ENCODE measurements at regions of chr16 and their contacts with region 1.

Region 1: DNA sequence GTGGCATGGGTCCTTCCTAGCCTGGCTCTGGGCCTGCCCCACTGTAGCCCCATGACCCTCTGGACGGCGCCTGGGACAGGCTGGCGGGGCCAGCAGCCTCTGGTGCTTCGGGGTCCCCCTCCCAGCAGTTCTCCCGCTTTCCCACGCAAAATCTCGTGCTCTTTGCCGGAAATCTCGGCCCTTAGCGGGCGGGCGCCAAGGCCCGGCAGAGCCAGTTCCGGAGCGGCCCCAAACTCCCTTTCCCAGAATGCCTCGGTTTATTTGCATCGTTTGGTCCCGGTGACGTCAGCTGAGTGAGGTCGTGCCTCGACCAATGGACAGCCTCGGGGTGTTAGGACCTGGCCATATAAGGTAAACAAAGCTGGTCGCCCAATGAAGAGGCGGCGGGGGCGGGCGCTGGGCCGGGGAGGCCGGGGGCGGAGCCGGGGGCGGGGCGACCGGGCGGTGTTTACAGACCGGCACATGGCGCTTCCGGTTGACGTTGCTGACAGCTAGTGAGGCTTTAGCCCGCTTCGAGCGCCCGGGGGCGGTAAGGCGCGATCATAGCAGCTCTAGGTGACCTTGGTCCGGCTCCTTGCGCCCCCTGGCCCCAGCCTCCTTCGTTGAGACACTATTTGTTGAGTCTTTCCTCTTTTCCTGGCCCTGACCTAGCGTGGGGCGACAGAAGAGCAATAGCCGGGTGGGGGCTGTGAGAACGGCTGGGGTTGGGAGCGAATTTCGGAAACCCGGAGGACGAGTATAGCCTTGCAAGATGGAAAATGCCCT is 1.5 kb upstream of the UBALD1 start:
- DNase-seq: peak; percentile 98
- ATAC-seq: peak; percentile 84
- H3K4me3 ChIP-seq: peak overlapping the region; percentile 82
- H3K27ac ChIP-seq: peak overlapping the region; percentile 99
- H3K4me1 ChIP-seq: peaks cover 20% of the 10 kb centered on the region
- H3K27me3 ChIP-seq: no peaks in the 10 kb centered on the region
- CTCF ChIP-seq: peak; percentile 44 to 68 (median 46)
- EP300 ChIP-seq: peak; percentile 22 to 55; a peak in 1 of 4 replicates
- POLR2A ChIP-seq: peak; percentile 91
- RAD21 ChIP-seq: peak; percentile 29; the same call in 1 of the 2 replicates

Region 2: DNA sequence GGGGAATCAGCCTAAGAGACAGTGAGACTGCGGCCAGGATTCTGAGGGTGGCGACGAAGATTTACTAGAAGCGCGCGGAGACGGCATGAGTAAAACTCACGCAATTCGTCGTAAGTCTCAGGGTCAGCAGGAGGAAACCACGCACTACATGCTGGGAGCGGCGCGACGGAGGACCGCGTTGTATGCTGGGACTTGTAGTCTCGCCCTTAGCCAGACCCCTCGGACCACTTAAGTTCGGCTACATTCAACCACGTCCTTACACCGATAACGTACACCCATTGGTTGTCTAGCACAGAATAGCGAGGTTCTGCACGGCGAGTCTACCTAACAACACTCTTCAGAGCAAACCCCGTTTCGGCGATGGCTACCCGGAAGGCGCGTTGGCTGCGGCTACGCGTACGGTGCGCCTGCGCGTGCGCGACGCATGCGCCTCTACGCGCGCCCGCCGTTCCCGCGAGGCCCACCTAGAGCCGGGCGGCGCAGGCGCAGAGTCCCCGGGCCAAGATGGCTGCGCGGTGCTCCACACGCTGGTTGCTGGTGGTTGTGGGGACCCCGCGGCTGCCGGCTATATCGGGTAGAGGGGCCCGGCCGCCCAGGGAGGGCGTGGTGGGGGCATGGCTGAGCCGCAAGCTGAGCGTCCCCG is 190.7 kb before region 1 on chr16 and contains the start of gene DNAJA3:
- CTCF ChIA-PET with region 1: no interaction called
- POLR2A ChIA-PET with region 1: no interaction called
- RAD21 ChIA-PET with region 1: no interaction called
- SMC1A ChIA-PET with region 1: no interaction called
- in situ Hi-C with region 1: no loop called
- intact Hi-C with region 1: loop called (anchors 10 kb)
- DNase-seq: peak; percentile 91
- ATAC-seq: peak; percentile 95
- H3K4me3 ChIP-seq: peak within 1 kb of the TSS; percentile 92
- H3K27ac ChIP-seq: peak within 1 kb of the TSS; percentile 100
- H3K4me1 ChIP-seq: no peaks in the 10 kb centered on the region
- H3K27me3 ChIP-seq: no peaks in the 10 kb centered on the region
- CTCF ChIP-seq: no peak
- EP300 ChIP-seq: no peak
- POLR2A ChIP-seq: peak; percentile 98
- RAD21 ChIP-seq: no peak
- polyA plus RNA-seq, gene DNAJA3: 8.4 to 20.4 TPM

Region 3: GRCh38 chr16:4511441-4512082 is 104.7 kb before region 1 on chr16:
- CTCF ChIA-PET with region 1: interaction called, 7 read pairs
- POLR2A ChIA-PET with region 1: interaction called, 6 read pairs
- RAD21 ChIA-PET with region 1: interaction called, 7 read pairs
- SMC1A ChIA-PET with region 1: interaction called, 4 read pairs
- in situ Hi-C with region 1: no loop called
- intact Hi-C with region 1: loop called (anchors 10 kb)
- DNase-seq: no peak
- ATAC-seq: no peak
- H3K4me3 ChIP-seq: no peak overlapping the region
- H3K27ac ChIP-seq: no peak overlapping the region
- H3K4me1 ChIP-seq: peaks cover 24% of the 10 kb centered on the region
- H3K27me3 ChIP-seq: no peaks in the 10 kb centered on the region
- CTCF ChIP-seq: peak; percentile 21 to 37 (median 23); a peak in 3 of 6 replicates
- EP300 ChIP-seq: no peak
- POLR2A ChIP-seq: no peak
- RAD21 ChIP-seq: no peak

Region 4: GRCh38 chr16:4556580-4556979 is 59.6 kb before region 1 on chr16:
- CTCF ChIA-PET with region 1: no interaction called
- POLR2A ChIA-PET with region 1: no interaction called
- RAD21 ChIA-PET with region 1: no interaction called
- SMC1A ChIA-PET with region 1: no interaction called
- in situ Hi-C with region 1: no loop called
- intact Hi-C with region 1: no loop called
- DNase-seq: no peak
- ATAC-seq: no peak
- H3K4me3 ChIP-seq: no peak overlapping the region
- H3K27ac ChIP-seq: no peak overlapping the region
- H3K4me1 ChIP-seq: no peaks in the 10 kb centered on the region
- H3K27me3 ChIP-seq: peaks cover 0 to 5% of the 10 kb centered on the region in 2 experiments; a peak in 2 of 4 replicates
- CTCF ChIP-seq: no peak
- EP300 ChIP-seq: no peak
- POLR2A ChIP-seq: no peak
- RAD21 ChIP-seq: no peak

Region 5: GRCh38 chr16:4641895-4642294 is 25.7 kb after region 1 on chr16:
- CTCF ChIA-PET with region 1: no interaction called
- POLR2A ChIA-PET with region 1: no interaction called
- RAD21 ChIA-PET with region 1: no interaction called
- SMC1A ChIA-PET with region 1: no interaction called
- in situ Hi-C with region 1: no loop called
- intact Hi-C with region 1: no loop called
- DNase-seq: no peak
- ATAC-seq: no peak
- H3K4me3 ChIP-seq: no peak overlapping the region
- H3K27ac ChIP-seq: no peak overlapping the region
- H3K4me1 ChIP-seq: peaks cover 5% of the 10 kb centered on the region; the same call in 1 of the 2 replicates
- H3K27me3 ChIP-seq: no peaks in the 10 kb centered on the region
- CTCF ChIP-seq: no peak
- EP300 ChIP-seq: no peak
- POLR2A ChIP-seq: no peak
- RAD21 ChIP-seq: no peak

Region 6: DNA sequence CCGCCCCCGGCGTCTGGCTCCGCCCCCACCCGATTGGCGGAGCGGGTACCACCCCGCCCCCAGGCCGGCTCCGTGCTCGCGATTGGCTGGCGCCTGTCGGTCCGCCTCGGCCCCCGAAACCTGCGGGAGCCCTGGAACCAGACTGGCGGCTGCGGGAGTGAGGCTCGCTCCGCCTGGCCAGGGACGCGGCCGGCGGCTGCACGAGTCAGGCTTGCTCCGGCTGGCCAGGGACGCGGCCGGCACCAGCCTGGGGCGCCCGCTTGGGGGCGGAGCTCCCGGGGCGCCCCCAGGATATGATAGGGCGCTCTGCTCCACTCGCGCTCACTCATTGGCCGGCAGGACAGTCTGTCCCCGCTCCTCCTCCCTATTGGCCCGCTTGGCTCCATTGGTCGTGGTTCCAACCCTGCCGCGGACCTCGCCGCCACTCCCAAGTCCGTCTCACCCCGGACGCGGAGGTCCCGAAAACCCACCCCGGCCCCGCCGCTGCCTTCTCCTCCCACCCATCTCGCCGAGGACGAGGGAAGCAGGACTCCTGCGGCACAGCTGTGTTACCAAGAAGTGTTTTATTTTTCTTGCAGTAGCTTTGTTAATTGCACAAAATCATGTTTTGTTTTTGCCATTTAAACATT is 186.5 kb after region 1 on chr16:
- CTCF ChIA-PET with region 1: interaction called, 3 read pairs
- POLR2A ChIA-PET with region 1: no interaction called
- RAD21 ChIA-PET with region 1: no interaction called
- SMC1A ChIA-PET with region 1: no interaction called
- in situ Hi-C with region 1: no loop called
- intact Hi-C with region 1: loop called (anchors 10 kb)
- DNase-seq: peak; percentile 47
- ATAC-seq: peak; percentile 97
- H3K4me3 ChIP-seq: peak overlapping the region; percentile 72
- H3K27ac ChIP-seq: peak overlapping the region; percentile 20; the same call in 1 of the 2 replicates
- H3K4me1 ChIP-seq: peaks cover 20% of the 10 kb centered on the region
- H3K27me3 ChIP-seq: no peaks in the 10 kb centered on the region
- CTCF ChIP-seq: no peak
- EP300 ChIP-seq: no peak
- POLR2A ChIP-seq: peak; percentile 74
- RAD21 ChIP-seq: no peak

Region 7: GRCh38 chr16:4862639-4863038 is 246.4 kb after region 1 on chr16:
- CTCF ChIA-PET with region 1: no interaction called
- POLR2A ChIA-PET with region 1: no interaction called
- RAD21 ChIA-PET with region 1: no interaction called
- SMC1A ChIA-PET with region 1: no interaction called
- in situ Hi-C with region 1: no loop called
- intact Hi-C with region 1: no loop called
- DNase-seq: no peak
- ATAC-seq: no peak
- H3K4me3 ChIP-seq: no peak overlapping the region
- H3K27ac ChIP-seq: no peak overlapping the region
- H3K4me1 ChIP-seq: no peaks in the 10 kb centered on the region
- H3K27me3 ChIP-seq: no peaks in the 10 kb centered on the region
- CTCF ChIP-seq: no peak
- EP300 ChIP-seq: no peak
- POLR2A ChIP-seq: no peak
- RAD21 ChIP-seq: no peak

Measured in GM12878 (cell line).